ENCODE measurements at regions of chr9 and their contacts with region 1.

Region 1: GRCh38 chr9:89278997-89279739 is 31.8 kb upstream of the CKS2 start:
- DNase-seq: no peak
- H3K4me3 ChIP-seq: no peak overlapping the region
- H3K27ac ChIP-seq: no peak overlapping the region
- H3K4me1 ChIP-seq: peaks cover 0 to 7% (median 0%) of the 10 kb centered on the region in 6 donors
- H3K27me3 ChIP-seq: peaks cover 0 to 4% (median 0%) of the 10 kb centered on the region in 7 donors
- CTCF ChIP-seq: peak; percentile 26 to 78 (median 67)
- POLR2A ChIP-seq: no peak

Region 2: GRCh38 chr9:88593537-88594185 is 685.5 kb before region 1 on chr9:
- intact Hi-C with region 1: loop called (anchors 5 kb)
- DNase-seq: no peak
- H3K4me3 ChIP-seq: no peak overlapping the region
- H3K27ac ChIP-seq: no peak overlapping the region
- H3K4me1 ChIP-seq: peaks cover 0 to 16% (median 2%) of the 10 kb centered on the region in 6 donors
- H3K27me3 ChIP-seq: peaks cover 0 to 8% (median 0%) of the 10 kb centered on the region in 7 donors
- CTCF ChIP-seq: peak; percentile 22 to 69 (median 57)
- POLR2A ChIP-seq: no peak

Region 3: GRCh38 chr9:89109666-89110065 is 169.5 kb before region 1 on chr9:
- intact Hi-C with region 1: no loop called
- DNase-seq: no peak
- H3K4me3 ChIP-seq: no peak overlapping the region
- H3K27ac ChIP-seq: no peak overlapping the region
- H3K4me1 ChIP-seq: no peaks in the 10 kb centered on the region
- H3K27me3 ChIP-seq: peaks cover 0 to 4% (median 0%) of the 10 kb centered on the region in 7 donors
- CTCF ChIP-seq: no peak
- POLR2A ChIP-seq: no peak

Region 4: GRCh38 chr9:89661956-89662717 is 383.0 kb after region 1 on chr9:
- intact Hi-C with region 1: no loop called
- DNase-seq: peak; percentile 89
- H3K4me3 ChIP-seq: peak overlapping the region in 5 of 8 donors; percentile 10 to 57 (median 18)
- H3K27ac ChIP-seq: peak overlapping the region in 7 of 8 donors; percentile 9 to 81 (median 69)
- H3K4me1 ChIP-seq: peaks cover 10 to 69% (median 36%) of the 10 kb centered on the region in 6 donors
- H3K27me3 ChIP-seq: peaks cover 0 to 5% (median 0%) of the 10 kb centered on the region in 7 donors
- CTCF ChIP-seq: no peak
- POLR2A ChIP-seq: no peak

Measured in spleen (tissue), 13 donors.